Mammary epithelial cell (primary cell): ENCODE measurements at regions of chr11 and their contacts with region 1.

Region 1: DNA sequence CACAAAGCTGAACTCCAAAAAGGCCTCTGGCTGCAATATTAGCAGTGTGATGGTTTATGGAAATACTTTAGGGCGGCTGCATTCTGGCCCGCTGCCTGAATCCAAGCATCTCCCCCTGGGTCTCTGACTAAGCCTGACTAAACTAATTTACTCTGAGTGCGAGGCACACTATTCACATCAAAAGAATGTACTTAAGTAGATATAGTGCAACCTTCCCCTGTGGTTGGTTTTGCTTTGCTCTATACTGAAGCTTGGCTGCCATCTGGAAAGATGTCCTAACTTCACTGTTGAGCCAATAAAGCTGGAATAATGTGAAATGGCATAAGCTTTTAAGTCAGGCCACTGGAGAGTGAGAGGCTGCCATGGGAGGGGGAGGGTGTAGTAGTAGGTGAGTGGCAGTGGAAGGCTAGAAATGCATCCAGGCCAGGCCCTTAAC is 321.6 kb downstream of the AASDHPPT start:
- DNase-seq: peak; percentile 93
- H3K4me3 ChIP-seq: no peak overlapping the region
- H3K27ac ChIP-seq: peak overlapping the region; percentile 39
- H3K4me1 ChIP-seq: peaks cover 22% of the 10 kb centered on the region
- H3K27me3 ChIP-seq: no peaks in the 10 kb centered on the region
- CTCF ChIP-seq: no peak

Region 2: GRCh38 chr11:106276859-106277436 is 122.1 kb before region 1 on chr11:
- CTCF ChIA-PET with region 1: no interaction called
- dilution Hi-C with region 1: no loop called
- in situ Hi-C with region 1: no loop called
- intact Hi-C with region 1: loop called (anchors 10 kb)
- DNase-seq: no peak
- H3K4me3 ChIP-seq: no peak overlapping the region
- H3K27ac ChIP-seq: no peak overlapping the region
- H3K4me1 ChIP-seq: peaks cover 11% of the 10 kb centered on the region
- H3K27me3 ChIP-seq: no peaks in the 10 kb centered on the region
- CTCF ChIP-seq: peak; percentile 22 to 58

Region 3: DNA sequence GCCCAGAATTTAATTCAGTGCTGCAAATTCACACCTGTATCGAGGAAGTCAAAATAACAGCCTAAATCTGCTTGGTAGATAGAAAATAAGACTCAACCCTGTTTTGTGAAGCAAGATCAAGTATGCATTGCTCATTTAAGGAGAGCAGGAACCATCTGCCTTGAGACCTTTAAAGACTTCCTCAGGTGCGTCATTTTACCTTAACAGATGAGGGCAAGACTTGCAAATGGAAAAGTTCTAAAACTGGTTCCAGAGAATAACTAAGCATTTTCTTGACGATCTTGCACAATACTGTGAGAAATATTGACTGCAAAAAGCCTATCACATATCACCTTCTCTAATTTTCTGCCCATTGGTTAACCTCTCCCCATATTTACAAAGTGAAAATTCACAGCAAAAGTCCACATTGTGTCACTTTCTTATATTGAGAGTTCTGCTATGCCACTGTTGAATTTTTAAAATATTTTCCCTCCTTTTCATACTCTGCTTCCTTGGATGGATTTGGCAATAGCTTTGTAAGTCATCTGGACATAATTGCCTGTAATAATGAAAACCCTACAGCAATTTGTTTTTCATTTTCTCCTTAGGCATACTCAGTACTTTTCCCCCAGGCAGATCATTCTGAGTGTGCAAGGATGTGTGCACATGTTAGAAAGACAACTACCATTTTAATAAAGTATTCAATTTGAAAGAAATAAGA is 87.4 kb before region 1 on chr11:
- CTCF ChIA-PET with region 1: no interaction called
- dilution Hi-C with region 1: no loop called
- in situ Hi-C with region 1: no loop called
- intact Hi-C with region 1: no loop called
- DNase-seq: no peak
- H3K4me3 ChIP-seq: no peak overlapping the region
- H3K27ac ChIP-seq: no peak overlapping the region
- H3K4me1 ChIP-seq: no peaks in the 10 kb centered on the region
- H3K27me3 ChIP-seq: no peaks in the 10 kb centered on the region
- CTCF ChIP-seq: no peak

Region 4: DNA sequence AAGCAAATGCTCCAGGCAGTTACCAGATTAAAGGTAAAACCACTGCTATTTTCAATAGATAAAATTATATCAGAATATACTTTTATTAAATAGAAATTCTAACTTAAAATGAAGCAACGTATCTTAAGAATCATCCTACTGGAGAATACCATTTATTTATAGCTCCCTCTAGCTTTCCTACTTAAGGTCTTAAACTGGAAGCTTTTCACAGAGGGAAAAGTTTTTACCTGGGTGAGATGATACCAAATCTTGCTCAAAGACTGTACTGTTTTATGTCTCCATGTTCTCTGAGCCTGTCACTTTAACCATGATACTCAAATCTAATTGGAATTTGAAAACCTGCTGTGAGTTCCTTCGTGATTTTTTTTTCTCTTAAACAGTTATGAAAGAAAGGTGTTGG is 29.9 kb before region 1 on chr11:
- CTCF ChIA-PET with region 1: no interaction called
- dilution Hi-C with region 1: no loop called
- in situ Hi-C with region 1: no loop called
- intact Hi-C with region 1: loop called (anchors 1 kb)
- DNase-seq: no peak
- H3K4me3 ChIP-seq: no peak overlapping the region
- H3K27ac ChIP-seq: peak overlapping the region; percentile 16
- H3K4me1 ChIP-seq: peaks cover 22% of the 10 kb centered on the region
- H3K27me3 ChIP-seq: no peaks in the 10 kb centered on the region
- CTCF ChIP-seq: no peak

Region 5: DNA sequence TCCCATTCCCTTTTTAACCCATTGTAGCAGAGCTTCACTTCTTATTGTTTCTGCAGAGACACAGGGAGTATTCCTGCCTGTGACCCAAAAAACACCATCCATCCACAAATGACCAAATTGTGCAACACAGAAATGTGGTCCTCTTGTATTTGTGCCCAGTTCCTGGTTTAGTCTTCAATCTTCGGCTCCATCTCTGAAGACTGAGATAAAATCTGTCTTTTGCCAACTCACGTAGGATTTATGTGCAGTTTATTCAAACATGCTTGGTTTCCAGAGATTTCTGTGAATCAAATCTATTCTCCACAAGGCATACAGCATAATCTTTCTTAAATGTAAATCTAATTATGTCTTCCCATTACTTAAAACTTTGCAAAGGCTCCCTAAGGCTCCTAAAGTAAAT is 14.7 kb before region 1 on chr11:
- CTCF ChIA-PET with region 1: no interaction called
- dilution Hi-C with region 1: no loop called
- in situ Hi-C with region 1: no loop called
- intact Hi-C with region 1: no loop called
- DNase-seq: no peak
- H3K4me3 ChIP-seq: no peak overlapping the region
- H3K27ac ChIP-seq: no peak overlapping the region
- H3K4me1 ChIP-seq: peaks cover 4% of the 10 kb centered on the region
- H3K27me3 ChIP-seq: no peaks in the 10 kb centered on the region
- CTCF ChIP-seq: no peak